ENCODE measurements at regions of chr12 and their contacts with region 1.

Region 1: DNA sequence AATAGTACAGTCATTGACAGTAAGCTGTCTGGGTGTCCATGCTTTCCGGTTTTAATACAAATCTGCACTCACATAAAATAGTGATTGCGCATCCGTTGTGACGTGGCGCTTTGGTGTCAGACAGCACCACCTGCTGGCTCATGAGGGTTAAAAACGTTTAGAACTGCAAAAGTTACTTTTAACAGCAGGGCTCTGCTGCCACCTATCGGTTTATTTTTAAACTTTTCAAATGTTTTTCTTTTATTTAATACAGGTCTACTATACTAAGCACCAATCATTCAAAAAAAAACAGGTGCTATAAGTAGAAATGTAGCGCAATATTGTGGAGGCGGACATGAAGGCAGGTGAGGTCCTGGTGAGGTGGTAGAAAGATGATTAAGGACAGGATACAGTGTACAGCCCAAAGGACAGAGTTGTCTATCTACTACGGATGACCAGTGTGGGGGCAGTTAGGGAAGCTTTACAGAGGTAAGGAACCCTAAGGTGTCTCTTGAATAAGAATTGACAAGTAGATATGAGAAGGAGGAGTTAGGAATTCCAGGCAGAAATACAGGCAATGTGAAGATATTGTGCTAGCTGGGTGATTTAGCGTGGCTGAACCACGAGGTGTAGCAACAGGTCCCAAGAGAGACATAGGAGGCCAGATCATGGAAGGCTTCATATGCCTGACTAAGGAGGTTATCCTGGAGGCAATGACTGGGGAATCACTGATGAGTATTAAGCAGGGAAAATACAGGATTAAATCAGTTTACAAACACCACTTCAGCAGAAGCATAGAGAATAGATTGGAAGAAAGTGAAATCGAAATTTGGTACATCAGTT is 91.5 kb upstream of the PRB2 start:
- DNase-seq: peak; percentile 83 to 90 (median 88)
- H3K4me3 ChIP-seq: no peak overlapping the region
- H3K4me3 Mint-ChIP-seq: no peak overlapping the region
- H3K27ac ChIP-seq: no peak overlapping the region
- H3K27ac Mint-ChIP-seq: no peak overlapping the region
- H3K4me1 ChIP-seq: peaks cover 0 to 2% of the 10 kb centered on the region in 2 donors
- H3K4me1 Mint-ChIP-seq: peaks cover 4% of the 10 kb centered on the region
- H3K27me3 ChIP-seq: no peaks in the 10 kb centered on the region
- H3K27me3 Mint-ChIP-seq: peaks cover 0 to 5% (median 0%) of the 10 kb centered on the region in 3 donors
- CTCF ChIP-seq: peak; percentile 99

Region 2: DNA sequence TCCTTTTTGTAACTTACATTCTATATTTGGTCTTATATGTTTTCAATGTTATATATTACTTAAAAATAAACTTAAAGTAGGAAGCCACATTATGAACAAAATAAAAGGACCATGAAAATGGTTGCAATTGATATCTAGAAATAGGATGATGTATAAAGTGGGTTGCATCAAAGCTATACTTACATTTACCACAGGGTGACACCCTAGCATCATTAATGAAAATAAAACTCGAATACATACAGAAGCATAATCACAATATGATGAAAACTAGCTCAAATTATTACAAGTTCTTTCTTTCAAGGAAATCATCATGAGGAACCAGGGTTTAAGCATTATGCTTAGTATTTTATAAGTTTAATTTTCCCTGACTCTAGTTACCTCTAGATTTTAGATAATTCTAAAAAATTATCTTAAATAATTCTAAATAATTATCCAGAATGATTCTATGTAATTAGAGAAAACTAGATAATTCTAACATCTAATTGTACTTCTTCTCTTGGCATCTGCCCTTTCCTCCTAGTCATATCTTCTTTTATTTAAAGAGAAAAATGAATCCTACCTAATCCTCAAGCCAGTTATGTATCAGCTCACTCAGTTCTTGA is 715.6 kb before region 1 on chr12:
- intact Hi-C with region 1: loop called in 1 of 2 experiments (anchors 10 kb)
- DNase-seq: peak in 2 of 3 donors; percentile 2 to 9
- H3K4me3 ChIP-seq: no peak overlapping the region
- H3K4me3 Mint-ChIP-seq: no peak overlapping the region
- H3K27ac ChIP-seq: no peak overlapping the region
- H3K27ac Mint-ChIP-seq: no peak overlapping the region
- H3K4me1 ChIP-seq: no peaks in the 10 kb centered on the region
- H3K4me1 Mint-ChIP-seq: no peaks in the 10 kb centered on the region
- H3K27me3 ChIP-seq: peaks cover 5% of the 10 kb centered on the region in 2 donors
- H3K27me3 Mint-ChIP-seq: peaks cover 5 to 15% (median 7%) of the 10 kb centered on the region in 3 donors
- CTCF ChIP-seq: peak; percentile 44

Region 3: GRCh38 chr12:11228296-11228879 is 258.4 kb before region 1 on chr12:
- intact Hi-C with region 1: loop called in 1 of 2 experiments (anchors 10 kb)
- DNase-seq: peak in 1 of 3 donors; percentile 5
- H3K4me3 ChIP-seq: no peak overlapping the region
- H3K4me3 Mint-ChIP-seq: no peak overlapping the region
- H3K27ac ChIP-seq: no peak overlapping the region
- H3K27ac Mint-ChIP-seq: no peak overlapping the region
- H3K4me1 ChIP-seq: no peaks in the 10 kb centered on the region
- H3K4me1 Mint-ChIP-seq: no peaks in the 10 kb centered on the region
- H3K27me3 ChIP-seq: no peaks in the 10 kb centered on the region
- H3K27me3 Mint-ChIP-seq: peaks cover 0 to 3% (median 0%) of the 10 kb centered on the region in 3 donors
- CTCF ChIP-seq: peak; percentile 55

Region 4: DNA sequence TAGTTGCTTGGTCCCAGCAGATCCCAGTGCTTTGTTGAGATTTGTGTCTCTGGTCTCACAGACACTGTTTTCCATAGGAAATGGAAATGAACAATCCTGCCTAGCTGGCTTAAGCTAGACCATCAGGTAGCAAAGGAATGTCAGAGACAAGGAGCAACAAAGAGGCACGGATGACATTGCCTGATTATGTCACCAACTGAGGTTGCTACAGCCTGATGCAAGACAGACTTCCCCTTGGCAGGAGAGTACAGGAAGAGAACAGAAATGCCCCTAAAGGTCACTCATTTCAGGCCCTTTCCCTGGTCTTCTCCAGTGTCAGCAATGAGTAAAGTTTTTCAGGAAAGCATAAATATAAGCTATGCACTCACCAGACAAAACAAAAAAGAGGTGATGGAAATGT is 89.5 kb before region 1 on chr12:
- intact Hi-C with region 1: no loop called
- DNase-seq: peak in 2 of 3 donors; percentile 3 to 49
- H3K4me3 ChIP-seq: no peak overlapping the region
- H3K4me3 Mint-ChIP-seq: no peak overlapping the region
- H3K27ac ChIP-seq: no peak overlapping the region
- H3K27ac Mint-ChIP-seq: peak overlapping the region in 1 of 7 donors; percentile 68
- H3K4me1 ChIP-seq: peaks cover 0 to 7% of the 10 kb centered on the region in 2 donors
- H3K4me1 Mint-ChIP-seq: peaks cover 12% of the 10 kb centered on the region
- H3K27me3 ChIP-seq: no peaks in the 10 kb centered on the region
- H3K27me3 Mint-ChIP-seq: peaks cover 0 to 3% (median 0%) of the 10 kb centered on the region in 3 donors
- CTCF ChIP-seq: no peak

Region 5: GRCh38 chr12:11446372-11446771 is 40.5 kb before region 1 on chr12:
- intact Hi-C with region 1: no loop called
- DNase-seq: no peak
- H3K4me3 ChIP-seq: no peak overlapping the region
- H3K4me3 Mint-ChIP-seq: no peak overlapping the region
- H3K27ac ChIP-seq: no peak overlapping the region
- H3K27ac Mint-ChIP-seq: no peak overlapping the region
- H3K4me1 ChIP-seq: no peaks in the 10 kb centered on the region
- H3K4me1 Mint-ChIP-seq: no peaks in the 10 kb centered on the region
- H3K27me3 ChIP-seq: no peaks in the 10 kb centered on the region
- H3K27me3 Mint-ChIP-seq: peaks cover 0 to 2% (median 0%) of the 10 kb centered on the region in 3 donors
- CTCF ChIP-seq: no peak

Region 6: GRCh38 chr12:11607313-11608081 is 120.7 kb after region 1 on chr12:
- intact Hi-C with region 1: no loop called
- DNase-seq: no peak
- H3K4me3 ChIP-seq: no peak overlapping the region
- H3K4me3 Mint-ChIP-seq: no peak overlapping the region
- H3K27ac ChIP-seq: no peak overlapping the region
- H3K27ac Mint-ChIP-seq: no peak overlapping the region
- H3K4me1 ChIP-seq: peaks cover 0 to 11% of the 10 kb centered on the region in 2 donors
- H3K4me1 Mint-ChIP-seq: peaks cover 17% of the 10 kb centered on the region
- H3K27me3 ChIP-seq: no peaks in the 10 kb centered on the region
- H3K27me3 Mint-ChIP-seq: peaks cover 0 to 3% (median 0%) of the 10 kb centered on the region in 3 donors
- CTCF ChIP-seq: no peak